B cell (primary cell): ENCODE measurements at regions of chr3 and their contacts with region 1.

Region 1: GRCh38 chr3:186259612-186260383 is 102.2 kb downstream of the DGKG start:
- DNase-seq: peak; percentile 80
- ATAC-seq: peak; percentile 65
- H3K4me3 ChIP-seq: no peak overlapping the region
- H3K4me3 Mint-ChIP-seq: peak overlapping the region; percentile 10
- H3K27ac ChIP-seq: no peak overlapping the region
- H3K27ac Mint-ChIP-seq: peak overlapping the region; percentile 41
- H3K4me1 ChIP-seq: peaks cover 31 to 35% of the 10 kb centered on the region in 2 donors
- H3K4me1 Mint-ChIP-seq: peaks cover 43% of the 10 kb centered on the region
- H3K27me3 ChIP-seq: no peaks in the 10 kb centered on the region
- H3K27me3 Mint-ChIP-seq: no peaks in the 10 kb centered on the region
- CTCF ChIP-seq: peak; percentile 81

Region 2: GRCh38 chr3:185937689-185938463 is 321.9 kb before region 1 on chr3 and contains the start of gene TRA2B:
- CTCF ChIA-PET with region 1: interaction called, 9 read pairs
- POLR2A ChIA-PET with region 1: no interaction called
- intact Hi-C with region 1: loop called (anchors 5 kb)
- DNase-seq: peak; percentile 99
- ATAC-seq: peak; percentile 89
- H3K4me3 ChIP-seq: peak within 1 kb of the TSS; percentile 99 to 100 (median 100)
- H3K4me3 Mint-ChIP-seq: peak within 1 kb of the TSS; percentile 99
- H3K27ac ChIP-seq: peak within 1 kb of the TSS; percentile 99 to 100
- H3K27ac Mint-ChIP-seq: peak within 1 kb of the TSS; percentile 100
- H3K4me1 ChIP-seq: peaks cover 26 to 28% of the 10 kb centered on the region in 2 donors
- H3K4me1 Mint-ChIP-seq: peaks cover 39% of the 10 kb centered on the region
- H3K27me3 ChIP-seq: no peaks in the 10 kb centered on the region
- H3K27me3 Mint-ChIP-seq: no peaks in the 10 kb centered on the region
- CTCF ChIP-seq: peak; percentile 51
- total RNA-seq, gene TRA2B: 218 and 220 TPM in 2 replicates

Region 3: GRCh38 chr3:186108941-186109865 is 150.6 kb before region 1 on chr3 and contains the start of gene ETV5:
- CTCF ChIA-PET with region 1: no interaction called
- POLR2A ChIA-PET with region 1: no interaction called
- intact Hi-C with region 1: loop called (anchors 2 kb)
- DNase-seq: peak; percentile 95
- ATAC-seq: peak; percentile 93
- H3K4me3 ChIP-seq: peak within 1 kb of the TSS; percentile 51 to 73 (median 63)
- H3K4me3 Mint-ChIP-seq: peak within 1 kb of the TSS; percentile 96
- H3K27ac ChIP-seq: no peak within 1 kb of the TSS
- H3K27ac Mint-ChIP-seq: peak within 1 kb of the TSS; percentile 71
- H3K4me1 ChIP-seq: peaks cover 32 to 41% of the 10 kb centered on the region in 2 donors
- H3K4me1 Mint-ChIP-seq: peaks cover 38% of the 10 kb centered on the region
- H3K27me3 ChIP-seq: peaks cover 2 to 79% (median 41%) of the 10 kb centered on the region in 4 experiments
- H3K27me3 Mint-ChIP-seq: peaks cover 51% of the 10 kb centered on the region
- CTCF ChIP-seq: no peak
- total RNA-seq, gene ETV5: 0.10 and 0.74 TPM in 2 replicates

Region 4: GRCh38 chr3:186241910-186242821 is 17.6 kb before region 1 on chr3:
- CTCF ChIA-PET with region 1: interaction called, 14 read pairs
- POLR2A ChIA-PET with region 1: interaction called, 3 read pairs
- intact Hi-C with region 1: no loop called
- DNase-seq: peak; percentile 70
- ATAC-seq: peak; percentile 69
- H3K4me3 ChIP-seq: no peak overlapping the region
- H3K4me3 Mint-ChIP-seq: no peak overlapping the region
- H3K27ac ChIP-seq: no peak overlapping the region
- H3K27ac Mint-ChIP-seq: no peak overlapping the region
- H3K4me1 ChIP-seq: peaks cover 0 to 14% of the 10 kb centered on the region in 2 donors
- H3K4me1 Mint-ChIP-seq: peaks cover 11% of the 10 kb centered on the region
- H3K27me3 ChIP-seq: no peaks in the 10 kb centered on the region
- H3K27me3 Mint-ChIP-seq: no peaks in the 10 kb centered on the region
- CTCF ChIP-seq: peak; percentile 53

Region 5: GRCh38 chr3:186361762-186362536 is 102.2 kb after region 1 on chr3 and contains the start of gene DGKG:
- CTCF ChIA-PET with region 1: interaction called, 9 read pairs
- POLR2A ChIA-PET with region 1: no interaction called
- intact Hi-C with region 1: loop called (anchors 1 kb)
- DNase-seq: peak; percentile 76
- ATAC-seq: peak; percentile 81
- H3K4me3 ChIP-seq: peak within 1 kb of the TSS; percentile 52 to 65 (median 58)
- H3K4me3 Mint-ChIP-seq: peak within 1 kb of the TSS; percentile 87
- H3K27ac ChIP-seq: peak within 1 kb of the TSS in 1 of 2 donors; percentile 9
- H3K27ac Mint-ChIP-seq: peak within 1 kb of the TSS; percentile 67
- H3K4me1 ChIP-seq: peaks cover 19 to 22% of the 10 kb centered on the region in 2 donors
- H3K4me1 Mint-ChIP-seq: peaks cover 24% of the 10 kb centered on the region
- H3K27me3 ChIP-seq: peaks cover 0 to 34% (median 11%) of the 10 kb centered on the region in 4 experiments
- H3K27me3 Mint-ChIP-seq: peaks cover 7% of the 10 kb centered on the region
- CTCF ChIP-seq: no peak
- total RNA-seq, gene DGKG: 10.9 and 11.6 TPM in 2 replicates

Region 6: DNA sequence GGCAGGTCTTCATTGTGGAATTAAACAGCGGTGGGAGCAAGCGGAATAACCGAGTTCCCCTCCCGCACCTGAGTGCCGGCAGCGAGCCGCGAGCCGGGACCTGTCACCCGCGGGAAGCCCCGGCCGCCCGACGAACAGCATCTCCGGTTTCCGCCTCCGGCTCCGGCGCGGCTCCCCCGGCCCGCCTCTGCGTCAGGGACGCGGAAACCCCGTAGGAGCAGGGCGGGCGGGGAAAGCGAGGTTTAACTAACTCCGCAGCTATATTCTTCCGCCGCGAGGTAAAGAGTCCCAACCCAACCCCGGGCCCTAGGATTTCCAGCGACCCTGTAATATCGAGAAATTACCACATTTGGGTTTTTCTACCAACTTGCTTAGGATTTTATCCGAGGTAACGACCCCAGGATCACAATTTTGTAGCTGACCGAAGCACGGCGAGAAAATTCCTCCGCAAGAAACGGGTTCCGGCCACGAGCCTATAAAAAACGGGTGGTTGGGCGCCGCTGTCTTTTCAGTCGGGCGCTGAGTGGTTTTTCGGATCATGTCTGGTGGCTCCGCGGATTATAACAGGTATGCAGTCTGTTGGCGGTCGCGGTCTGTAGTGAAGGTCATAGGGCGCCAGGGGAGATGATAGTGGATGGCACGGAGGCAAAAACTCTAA is 523.4 kb after region 1 on chr3 and contains the start of gene EIF4A2:
- CTCF ChIA-PET with region 1: no interaction called
- POLR2A ChIA-PET with region 1: no interaction called
- intact Hi-C with region 1: loop called (anchors 2 kb)
- DNase-seq: peak; percentile 97
- ATAC-seq: peak; percentile 77
- H3K4me3 ChIP-seq: peak within 1 kb of the TSS; percentile 80 to 100 (median 90)
- H3K4me3 Mint-ChIP-seq: peak within 1 kb of the TSS; percentile 97
- H3K27ac ChIP-seq: peak within 1 kb of the TSS; percentile 97 to 98
- H3K27ac Mint-ChIP-seq: peak within 1 kb of the TSS; percentile 99
- H3K4me1 ChIP-seq: peaks cover 37 to 40% of the 10 kb centered on the region in 2 donors
- H3K4me1 Mint-ChIP-seq: peaks cover 52% of the 10 kb centered on the region
- H3K27me3 ChIP-seq: no peaks in the 10 kb centered on the region
- H3K27me3 Mint-ChIP-seq: no peaks in the 10 kb centered on the region
- CTCF ChIP-seq: no peak
- total RNA-seq, gene EIF4A2: 490 and 506 TPM in 2 replicates

Region 7: GRCh38 chr3:187139126-187139894 is 879.5 kb after region 1 on chr3 and contains the start of gene RPL39L:
- CTCF ChIA-PET with region 1: no interaction called
- POLR2A ChIA-PET with region 1: no interaction called
- intact Hi-C with region 1: loop called (anchors 10 kb)
- DNase-seq: peak; percentile 95
- ATAC-seq: peak; percentile 95
- H3K4me3 ChIP-seq: peak within 1 kb of the TSS in 4 of 5 experiments; percentile 49 to 68 (median 58)
- H3K4me3 Mint-ChIP-seq: peak within 1 kb of the TSS; percentile 90
- H3K27ac ChIP-seq: peak within 1 kb of the TSS; percentile 77 to 79
- H3K27ac Mint-ChIP-seq: peak within 1 kb of the TSS; percentile 90
- H3K4me1 ChIP-seq: peaks cover 12 to 14% of the 10 kb centered on the region in 2 donors
- H3K4me1 Mint-ChIP-seq: peaks cover 16% of the 10 kb centered on the region
- H3K27me3 ChIP-seq: no peaks in the 10 kb centered on the region
- H3K27me3 Mint-ChIP-seq: no peaks in the 10 kb centered on the region
- CTCF ChIP-seq: peak; percentile 79
- total RNA-seq, gene RPL39L: 2.0 and 3.1 TPM in 2 replicates